Endothelial cell of umbilical vein (primary cell): ENCODE measurements at regions of chr5 and their contacts with region 1.

Region 1: DNA sequence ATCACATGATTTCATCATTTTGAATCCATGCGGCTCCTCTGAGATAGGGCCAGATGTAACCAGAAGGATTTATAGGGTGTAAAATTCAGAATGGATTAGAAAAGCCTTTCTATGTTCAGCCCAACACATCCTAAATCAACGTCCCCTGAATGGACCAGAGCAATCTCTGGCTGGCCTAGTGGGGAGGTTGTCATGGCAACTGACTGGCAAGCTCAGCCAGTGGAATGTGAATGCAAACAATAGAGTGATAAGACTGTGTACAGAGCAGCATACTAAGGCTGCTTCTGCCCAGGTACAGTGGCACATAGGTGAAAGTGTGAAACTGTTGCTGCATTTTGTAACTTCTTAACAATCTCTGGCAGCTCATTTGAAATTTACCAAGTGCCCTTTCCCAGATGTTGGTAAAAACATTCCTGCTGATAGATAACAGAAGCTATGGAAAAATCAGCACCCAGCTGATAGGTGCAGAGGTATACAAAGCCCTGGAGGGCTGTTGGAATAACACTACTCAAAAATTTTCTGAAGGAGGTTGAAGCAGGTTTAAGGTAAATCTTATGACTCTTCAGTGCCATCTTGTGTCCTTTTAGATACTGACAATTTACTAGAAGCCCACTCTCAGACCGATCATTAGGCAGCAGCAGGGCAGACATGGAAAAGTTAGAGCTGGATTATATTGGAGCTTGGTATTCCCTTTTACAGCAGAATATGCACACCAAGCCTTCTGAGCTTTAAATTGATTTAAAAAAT is 267.2 kb downstream of the RAB3C start:
- DNase-seq: peak; percentile 44
- H3K4me3 ChIP-seq: no peak overlapping the region
- H3K27ac ChIP-seq: no peak overlapping the region
- H3K4me1 ChIP-seq: no peaks in the 10 kb centered on the region
- H3K27me3 ChIP-seq: peaks cover 6 to 10% of the 10 kb centered on the region in 2 experiments
- CTCF ChIP-seq: peak; percentile 8 to 27
- POLR2A ChIP-seq: no peak

Region 2: GRCh38 chr5:58477760-58478376 is 372.2 kb before region 1 on chr5:
- CTCF ChIA-PET with region 1: interaction called, 70 read pairs
- POLR2A ChIA-PET with region 1: no interaction called
- dilution Hi-C with region 1: no loop called
- intact Hi-C with region 1: loop called (anchors 1 kb)
- DNase-seq: no peak
- H3K4me3 ChIP-seq: no peak overlapping the region
- H3K27ac ChIP-seq: no peak overlapping the region
- H3K4me1 ChIP-seq: no peaks in the 10 kb centered on the region
- H3K27me3 ChIP-seq: peaks cover 0 to 6% of the 10 kb centered on the region in 2 experiments
- CTCF ChIP-seq: no peak
- POLR2A ChIP-seq: no peak

Region 3: GRCh38 chr5:58498340-58498942 is 351.7 kb before region 1 on chr5:
- CTCF ChIA-PET with region 1: interaction called, 203 read pairs
- POLR2A ChIA-PET with region 1: no interaction called
- dilution Hi-C with region 1: no loop called
- intact Hi-C with region 1: loop called (anchors 1 kb)
- DNase-seq: peak; percentile 65
- H3K4me3 ChIP-seq: no peak overlapping the region
- H3K27ac ChIP-seq: no peak overlapping the region
- H3K4me1 ChIP-seq: no peaks in the 10 kb centered on the region
- H3K27me3 ChIP-seq: peaks cover under 1 to 1% of the 10 kb centered on the region in 2 experiments
- CTCF ChIP-seq: peak; percentile 64 to 68
- POLR2A ChIP-seq: no peak

Region 4: DNA sequence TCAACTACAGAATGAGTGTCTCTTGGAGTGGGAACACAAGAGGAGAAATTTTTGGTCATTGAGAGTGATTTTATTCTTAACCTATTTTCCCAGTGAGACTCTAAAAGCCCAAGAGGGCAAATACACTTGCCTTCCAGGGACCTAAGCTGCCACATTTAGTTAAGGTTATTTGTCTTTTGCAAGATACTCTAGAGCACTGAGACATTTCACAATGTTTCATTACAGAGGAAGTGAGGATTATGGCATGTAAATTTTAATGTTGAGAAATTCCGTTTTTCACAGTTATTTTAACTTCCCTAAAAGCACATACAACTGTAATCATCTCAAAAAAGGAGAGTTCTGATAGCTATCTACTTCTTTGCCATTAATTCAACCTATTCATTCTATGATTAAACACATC is 305.9 kb before region 1 on chr5:
- CTCF ChIA-PET with region 1: interaction called, 17 read pairs
- POLR2A ChIA-PET with region 1: no interaction called
- dilution Hi-C with region 1: no loop called
- intact Hi-C with region 1: no loop called
- DNase-seq: no peak
- H3K4me3 ChIP-seq: no peak overlapping the region
- H3K27ac ChIP-seq: no peak overlapping the region
- H3K4me1 ChIP-seq: no peaks in the 10 kb centered on the region
- H3K27me3 ChIP-seq: no peaks in the 10 kb centered on the region
- CTCF ChIP-seq: no peak
- POLR2A ChIP-seq: no peak

Region 5: DNA sequence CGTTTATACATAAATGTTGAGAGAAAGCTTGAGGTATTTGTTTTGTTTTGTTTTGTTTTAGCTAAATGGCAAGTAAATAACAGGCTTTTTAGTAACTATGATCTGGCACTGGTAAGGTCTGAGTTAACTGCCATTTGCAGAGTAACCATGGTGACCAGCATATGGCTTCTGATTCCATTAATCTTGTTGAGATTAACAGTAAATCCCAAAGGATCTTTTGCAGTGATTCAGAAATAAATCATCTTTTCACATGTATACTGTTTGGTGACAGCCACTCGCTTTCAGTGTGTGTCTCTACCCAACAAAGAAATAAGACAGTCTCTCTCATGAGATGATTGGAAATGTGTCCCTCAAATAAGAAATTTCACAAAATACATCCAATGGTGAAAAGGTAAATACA is 31.6 kb before region 1 on chr5:
- CTCF ChIA-PET with region 1: interaction called, 10 read pairs
- POLR2A ChIA-PET with region 1: no interaction called
- dilution Hi-C with region 1: no loop called
- intact Hi-C with region 1: no loop called
- DNase-seq: no peak
- H3K4me3 ChIP-seq: no peak overlapping the region
- H3K27ac ChIP-seq: no peak overlapping the region
- H3K4me1 ChIP-seq: no peaks in the 10 kb centered on the region
- H3K27me3 ChIP-seq: no peaks in the 10 kb centered on the region
- CTCF ChIP-seq: no peak
- POLR2A ChIP-seq: no peak